GM12878 (cell line): ENCODE measurements at regions of chr4 and their contacts with region 1.

Region 1: GRCh38 chr4:87838890-87839591 is 6.3 kb downstream of the MEPE start:
- DNase-seq: no peak
- ATAC-seq: peak; percentile 75
- H3K4me3 ChIP-seq: no peak overlapping the region
- H3K27ac ChIP-seq: no peak overlapping the region
- H3K4me1 ChIP-seq: no peaks in the 10 kb centered on the region
- H3K27me3 ChIP-seq: no peaks in the 10 kb centered on the region; a peak in 1 of 4 replicates
- CTCF ChIP-seq: peak; percentile 53 to 64 (median 61)
- EP300 ChIP-seq: no peak
- POLR2A ChIP-seq: no peak
- RAD21 ChIP-seq: peak; percentile 71

Region 2: GRCh38 chr4:87353592-87353991 is 485.4 kb before region 1 on chr4:
- CTCF ChIA-PET with region 1: interaction called, 4 read pairs
- POLR2A ChIA-PET with region 1: no interaction called
- RAD21 ChIA-PET with region 1: no interaction called
- SMC1A ChIA-PET with region 1: no interaction called
- in situ Hi-C with region 1: no loop called
- intact Hi-C with region 1: loop called (anchors 5 kb)
- DNase-seq: peak; percentile 13
- ATAC-seq: peak; percentile 83
- H3K4me3 ChIP-seq: no peak overlapping the region
- H3K27ac ChIP-seq: no peak overlapping the region
- H3K4me1 ChIP-seq: peaks cover 9% of the 10 kb centered on the region
- H3K27me3 ChIP-seq: no peaks in the 10 kb centered on the region
- CTCF ChIP-seq: peak; percentile 51 to 74 (median 66); a peak in 5 of 6 replicates
- EP300 ChIP-seq: no peak
- POLR2A ChIP-seq: no peak
- RAD21 ChIP-seq: peak; percentile 84

Region 3: DNA sequence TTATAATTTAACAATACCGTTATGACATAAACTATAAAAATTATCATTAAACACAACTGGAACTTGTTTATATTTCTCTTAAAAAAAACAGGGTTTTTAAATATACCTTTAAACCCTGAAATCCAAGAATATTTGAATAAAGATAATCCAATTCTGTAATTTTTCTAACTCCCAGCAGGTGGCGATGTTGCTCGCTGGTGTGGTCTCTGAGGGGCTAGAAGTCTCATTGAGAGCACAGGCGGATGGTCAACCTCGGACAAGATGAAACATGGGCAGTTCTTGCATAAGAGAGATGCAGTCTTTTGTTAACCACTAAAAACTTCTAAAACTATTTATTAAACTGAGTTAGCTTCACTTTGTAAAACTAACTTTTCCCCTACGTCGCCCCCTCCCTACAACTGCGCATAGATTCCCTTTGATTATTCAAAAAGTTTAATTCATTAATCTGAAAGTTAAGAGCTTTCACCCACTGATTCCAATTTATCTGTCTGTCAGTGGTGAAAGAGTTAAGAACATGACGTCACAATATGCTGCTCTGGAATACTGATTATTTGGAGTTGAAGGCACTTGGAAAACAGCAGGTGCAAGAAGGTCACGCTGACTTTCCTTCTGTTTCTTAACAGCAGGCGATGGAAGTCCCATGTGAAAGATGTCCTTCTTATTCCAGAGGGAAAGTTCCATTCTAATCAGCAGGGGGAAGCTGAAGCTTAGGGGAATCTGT is 159.4 kb before region 1 on chr4:
- CTCF ChIA-PET with region 1: interaction called, 11 read pairs
- POLR2A ChIA-PET with region 1: no interaction called
- RAD21 ChIA-PET with region 1: interaction called, 3 read pairs
- SMC1A ChIA-PET with region 1: interaction called, 5 read pairs
- in situ Hi-C with region 1: loop called (anchors 5 kb)
- intact Hi-C with region 1: loop called (anchors 1 kb)
- DNase-seq: peak; percentile 2
- ATAC-seq: peak; percentile 61; the same call in 2 of the 3 replicates
- H3K4me3 ChIP-seq: no peak overlapping the region
- H3K27ac ChIP-seq: no peak overlapping the region
- H3K4me1 ChIP-seq: peaks cover 5% of the 10 kb centered on the region; the same call in 1 of the 2 replicates
- H3K27me3 ChIP-seq: no peaks in the 10 kb centered on the region
- CTCF ChIP-seq: peak; percentile 59 to 73 (median 66)
- EP300 ChIP-seq: no peak
- POLR2A ChIP-seq: no peak
- RAD21 ChIP-seq: peak; percentile 86

Region 4: DNA sequence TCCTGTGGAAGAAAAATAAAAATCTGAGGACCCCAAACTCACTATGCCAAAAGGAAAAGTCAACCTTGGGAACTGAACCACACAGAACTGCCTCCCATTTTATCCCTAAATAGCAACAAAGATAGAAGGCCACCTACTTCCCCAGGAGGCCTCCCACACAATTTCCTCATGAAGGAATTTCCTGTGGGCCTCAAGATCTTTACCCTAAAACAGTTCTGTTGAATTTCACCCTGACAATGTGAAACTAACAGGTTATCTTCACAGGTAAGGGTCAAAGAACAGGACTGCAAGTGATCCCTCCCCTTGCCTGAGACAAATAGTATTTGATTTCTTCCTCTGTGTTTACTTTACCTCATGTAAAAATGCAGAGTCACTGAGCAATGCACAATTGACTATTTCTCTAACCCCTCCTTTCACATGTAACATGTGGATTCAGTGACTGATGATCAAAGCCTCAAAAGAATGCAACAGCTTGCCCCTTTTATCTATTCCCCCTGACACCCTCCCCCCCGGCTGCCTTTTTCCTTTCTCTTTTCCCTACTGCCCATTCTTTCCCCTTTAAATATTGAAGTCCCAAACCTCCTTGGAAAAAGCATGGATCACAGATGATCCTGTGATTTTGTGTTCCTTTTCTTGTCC is 27.0 kb after region 1 on chr4:
- CTCF ChIA-PET with region 1: no interaction called
- POLR2A ChIA-PET with region 1: no interaction called
- RAD21 ChIA-PET with region 1: no interaction called
- SMC1A ChIA-PET with region 1: no interaction called
- in situ Hi-C with region 1: no loop called
- intact Hi-C with region 1: no loop called
- DNase-seq: no peak
- ATAC-seq: no peak
- H3K4me3 ChIP-seq: no peak overlapping the region
- H3K27ac ChIP-seq: no peak overlapping the region
- H3K4me1 ChIP-seq: no peaks in the 10 kb centered on the region
- H3K27me3 ChIP-seq: no peaks in the 10 kb centered on the region
- CTCF ChIP-seq: no peak
- EP300 ChIP-seq: no peak
- POLR2A ChIP-seq: no peak
- RAD21 ChIP-seq: no peak